Naive thymus-derived CD4-positive, alpha-beta T cell (primary cell): ENCODE measurements at regions of chr16 and their contacts with region 1.

Region 1: DNA sequence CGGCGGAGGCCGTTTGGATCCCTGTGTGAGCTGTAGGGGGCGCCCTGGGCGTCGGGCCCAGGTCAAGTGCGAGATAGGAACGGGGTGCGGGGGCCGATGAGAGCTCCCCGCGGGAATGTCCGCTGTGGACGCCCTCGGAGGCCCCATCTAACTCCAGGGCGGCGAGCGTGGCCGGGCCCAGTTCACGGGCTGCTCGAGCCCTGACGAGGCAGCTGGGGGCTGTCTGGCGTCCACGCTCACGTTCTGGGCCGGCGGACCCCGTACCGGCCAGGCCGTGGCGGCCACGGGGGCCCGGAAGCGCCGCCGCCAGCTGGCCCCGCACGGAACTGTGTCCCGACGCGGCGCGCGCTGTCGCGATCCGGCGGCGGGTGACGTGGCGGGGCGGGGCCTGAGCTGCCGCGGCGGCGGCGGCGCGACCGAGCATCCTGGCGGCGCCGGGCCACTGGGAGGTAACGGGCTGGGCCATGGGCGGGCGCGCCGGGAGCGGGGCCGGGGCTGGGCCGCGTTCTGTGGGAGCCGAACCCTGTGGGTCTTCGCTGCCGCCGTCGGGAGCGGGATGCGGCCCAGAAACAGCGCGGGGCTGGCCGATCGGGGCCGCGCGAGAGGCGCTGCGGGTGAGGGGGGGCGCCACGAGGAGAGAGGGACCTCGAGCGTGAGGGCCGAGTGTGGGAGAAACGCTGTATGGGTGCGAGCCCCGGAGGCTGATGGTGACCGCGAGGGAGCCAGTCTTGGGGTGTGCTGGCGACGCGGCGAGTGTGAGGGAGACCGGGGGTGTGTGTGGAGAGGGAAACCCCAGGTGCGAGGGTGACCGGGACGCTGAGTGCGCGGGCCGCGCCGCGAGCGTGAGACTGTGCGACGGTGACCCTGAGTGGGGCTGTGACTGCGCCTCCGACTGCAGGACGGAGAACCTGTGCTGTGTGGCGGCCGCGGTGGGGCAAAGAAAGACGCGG is at the start of gene SLC7A6:
- DNase-seq: peak; percentile 78 to 91 (median 84)
- ATAC-seq: peak; percentile 83
- H3K4me3 ChIP-seq: peak within 1 kb of the TSS; percentile 78
- H3K4me3 Mint-ChIP-seq: peak within 1 kb of the TSS; percentile 93 to 100 (median 97)
- H3K27ac ChIP-seq: peak within 1 kb of the TSS; percentile 99
- H3K27ac Mint-ChIP-seq: peak within 1 kb of the TSS; percentile 89 to 100 (median 98)
- H3K4me1 ChIP-seq: peaks cover 27 to 39% of the 10 kb centered on the region in 2 donors
- H3K4me1 Mint-ChIP-seq: peaks cover 40 to 69% (median 56%) of the 10 kb centered on the region in 7 donors
- H3K27me3 ChIP-seq: no peaks in the 10 kb centered on the region
- H3K27me3 Mint-ChIP-seq: no peaks in the 10 kb centered on the region
- total RNA-seq, gene SLC7A6: 112 to 248 (median 207) TPM

Region 2: DNA sequence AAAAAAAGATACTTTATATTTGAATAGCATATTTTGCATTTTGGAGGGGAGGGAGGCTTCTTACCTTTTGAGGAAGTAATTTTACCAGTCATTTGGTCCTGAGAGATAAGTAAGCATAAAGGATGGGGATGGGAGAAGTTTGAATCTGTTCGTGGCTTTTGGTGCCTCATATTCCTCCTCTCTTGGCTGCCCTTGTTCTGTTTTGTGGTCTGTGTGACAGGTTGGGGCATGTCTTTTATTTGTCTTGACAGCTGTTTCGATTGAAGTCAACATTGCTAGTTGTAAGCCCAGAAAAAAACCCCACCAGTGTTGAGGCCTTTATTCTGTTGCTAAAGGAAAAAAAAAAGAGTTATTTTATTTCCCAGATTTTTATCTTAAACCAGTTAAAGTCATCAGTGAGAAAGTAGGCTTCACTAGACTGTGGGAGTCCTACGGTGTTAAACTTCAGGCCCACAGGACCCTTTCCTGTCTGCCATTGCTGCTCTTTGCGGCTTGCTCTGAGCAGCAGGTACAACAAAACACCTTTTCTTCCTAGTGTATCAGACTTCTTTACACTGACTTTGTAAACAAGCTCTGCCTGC is 11.3 kb after region 1 on chr16:
- CTCF ChIA-PET with region 1: interaction called, 317 read pairs
- POLR2A ChIA-PET with region 1: interaction called, 78 read pairs
- intact Hi-C with region 1: loop called (anchors 1 kb)
- DNase-seq: peak in 7 of 9 donors; percentile 68 to 84 (median 83)
- ATAC-seq: peak; percentile 86
- H3K4me3 ChIP-seq: peak overlapping the region; percentile 38
- H3K4me3 Mint-ChIP-seq: peak overlapping the region; percentile 71 to 100 (median 80)
- H3K27ac ChIP-seq: peak overlapping the region; percentile 83
- H3K27ac Mint-ChIP-seq: peak overlapping the region; percentile 89 to 98 (median 97)
- H3K4me1 ChIP-seq: peaks cover 58 to 83% of the 10 kb centered on the region in 2 donors
- H3K4me1 Mint-ChIP-seq: peaks cover 40 to 84% (median 74%) of the 10 kb centered on the region in 7 donors
- H3K27me3 ChIP-seq: no peaks in the 10 kb centered on the region
- H3K27me3 Mint-ChIP-seq: no peaks in the 10 kb centered on the region

Region 3: DNA sequence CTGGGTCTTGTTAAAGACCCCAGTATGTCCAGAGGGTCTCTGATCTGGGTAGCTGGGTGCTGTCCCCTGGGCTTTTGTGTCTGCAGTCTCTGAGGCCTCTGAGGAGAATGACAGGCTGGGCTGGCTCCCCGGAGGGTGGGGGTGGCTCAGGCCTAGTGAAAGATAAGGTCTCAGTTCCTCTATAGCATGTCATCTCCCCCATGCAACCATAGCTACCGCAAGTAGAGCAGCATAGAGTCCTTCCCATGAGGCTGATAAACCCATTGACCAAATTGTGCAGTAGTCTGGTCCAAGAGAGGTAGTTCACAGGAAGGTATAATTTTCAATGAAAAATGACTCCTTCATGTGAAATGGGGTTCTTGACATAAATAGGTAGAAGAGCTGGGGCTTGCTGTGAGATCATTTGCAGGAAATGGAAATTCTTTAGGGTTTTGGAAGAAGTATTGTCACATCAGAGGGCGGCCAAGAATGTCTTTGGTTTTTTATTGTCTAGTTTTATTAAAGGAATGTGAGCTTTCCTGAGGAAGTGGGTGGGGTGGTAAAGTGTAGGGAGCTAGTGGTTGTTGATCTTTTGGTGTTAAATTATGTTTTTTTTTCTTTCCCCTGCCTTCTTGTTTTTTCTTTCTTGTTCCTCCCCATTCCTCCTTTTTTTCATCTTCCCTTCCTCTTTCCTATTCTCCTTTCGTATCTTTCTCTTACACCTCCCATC is 25.4 kb after region 1 on chr16:
- CTCF ChIA-PET with region 1: interaction called, 317 read pairs
- POLR2A ChIA-PET with region 1: interaction called, 531 read pairs
- intact Hi-C with region 1: loop called (anchors 1 kb)
- DNase-seq: peak in 6 of 9 donors; percentile 20 to 57 (median 52)
- ATAC-seq: peak; percentile 75
- H3K4me3 ChIP-seq: peak overlapping the region; percentile 2
- H3K4me3 Mint-ChIP-seq: peak overlapping the region; percentile 43 to 87 (median 68)
- H3K27ac ChIP-seq: peak overlapping the region; percentile 68
- H3K27ac Mint-ChIP-seq: peak overlapping the region; percentile 84 to 95 (median 90)
- H3K4me1 ChIP-seq: peaks cover 76 to 83% of the 10 kb centered on the region in 2 donors
- H3K4me1 Mint-ChIP-seq: peaks cover 70 to 97% (median 87%) of the 10 kb centered on the region in 7 donors
- H3K27me3 ChIP-seq: no peaks in the 10 kb centered on the region
- H3K27me3 Mint-ChIP-seq: no peaks in the 10 kb centered on the region

Region 4: DNA sequence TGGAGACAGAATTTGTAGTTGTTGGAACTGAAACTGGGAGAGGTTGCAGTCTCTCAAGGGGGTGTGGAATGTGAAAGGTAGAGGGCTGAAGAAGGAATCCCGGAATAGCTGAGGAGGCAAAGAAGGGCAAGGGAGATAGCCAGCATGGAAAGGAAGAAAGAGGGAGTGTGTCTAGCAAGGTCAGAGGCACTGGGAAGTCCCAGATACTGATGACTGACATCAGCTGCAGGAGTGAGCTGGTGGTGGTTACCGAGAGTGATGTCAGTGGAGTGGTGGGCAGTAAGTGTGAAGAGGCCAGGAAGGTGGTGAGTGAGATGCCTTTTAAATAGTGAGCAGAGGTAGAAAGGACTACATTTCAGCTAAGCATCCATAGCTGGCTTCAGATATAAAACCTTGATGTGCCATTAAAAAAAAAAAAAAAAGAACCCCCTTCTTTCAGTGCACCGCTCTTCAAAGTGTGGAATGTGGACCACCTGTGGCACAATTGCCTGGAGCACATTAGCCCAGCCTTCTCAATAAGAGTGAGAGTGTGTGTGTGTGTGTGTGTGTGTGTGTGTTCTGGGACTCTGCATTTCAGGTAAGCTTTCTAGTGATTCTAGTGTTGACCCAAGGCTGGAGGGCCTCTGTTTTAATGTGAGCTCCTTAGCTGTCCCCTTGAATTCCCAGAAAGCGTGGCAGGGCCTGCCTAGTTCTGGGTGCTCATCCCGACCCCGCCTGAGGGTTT is 54.9 kb after region 1 on chr16:
- CTCF ChIA-PET with region 1: interaction called, 224 read pairs
- POLR2A ChIA-PET with region 1: interaction called, 6 read pairs
- intact Hi-C with region 1: no loop called
- DNase-seq: peak in 1 of 9 donors; percentile 65
- ATAC-seq: peak; percentile 60
- H3K4me3 ChIP-seq: no peak overlapping the region
- H3K4me3 Mint-ChIP-seq: peak overlapping the region in 1 of 10 donors; percentile 43
- H3K27ac ChIP-seq: no peak overlapping the region
- H3K27ac Mint-ChIP-seq: peak overlapping the region; percentile 6 to 90 (median 55)
- H3K4me1 ChIP-seq: no peaks in the 10 kb centered on the region
- H3K4me1 Mint-ChIP-seq: peaks cover 15 to 41% (median 30%) of the 10 kb centered on the region in 7 donors
- H3K27me3 ChIP-seq: no peaks in the 10 kb centered on the region
- H3K27me3 Mint-ChIP-seq: no peaks in the 10 kb centered on the region

Region 5: GRCh38 chr16:68335175-68335574 is 70.8 kb after region 1 on chr16:
- CTCF ChIA-PET with region 1: interaction called, 224 read pairs
- POLR2A ChIA-PET with region 1: interaction called, 68 read pairs
- intact Hi-C with region 1: no loop called
- DNase-seq: no peak
- ATAC-seq: no peak
- H3K4me3 ChIP-seq: no peak overlapping the region
- H3K4me3 Mint-ChIP-seq: no peak overlapping the region
- H3K27ac ChIP-seq: no peak overlapping the region
- H3K27ac Mint-ChIP-seq: peak overlapping the region in 2 of 9 donors; percentile 71 to 77
- H3K4me1 ChIP-seq: peaks cover 0 to 13% of the 10 kb centered on the region in 2 donors
- H3K4me1 Mint-ChIP-seq: peaks cover 11 to 25% (median 19%) of the 10 kb centered on the region in 7 donors
- H3K27me3 ChIP-seq: no peaks in the 10 kb centered on the region
- H3K27me3 Mint-ChIP-seq: no peaks in the 10 kb centered on the region

Region 6: DNA sequence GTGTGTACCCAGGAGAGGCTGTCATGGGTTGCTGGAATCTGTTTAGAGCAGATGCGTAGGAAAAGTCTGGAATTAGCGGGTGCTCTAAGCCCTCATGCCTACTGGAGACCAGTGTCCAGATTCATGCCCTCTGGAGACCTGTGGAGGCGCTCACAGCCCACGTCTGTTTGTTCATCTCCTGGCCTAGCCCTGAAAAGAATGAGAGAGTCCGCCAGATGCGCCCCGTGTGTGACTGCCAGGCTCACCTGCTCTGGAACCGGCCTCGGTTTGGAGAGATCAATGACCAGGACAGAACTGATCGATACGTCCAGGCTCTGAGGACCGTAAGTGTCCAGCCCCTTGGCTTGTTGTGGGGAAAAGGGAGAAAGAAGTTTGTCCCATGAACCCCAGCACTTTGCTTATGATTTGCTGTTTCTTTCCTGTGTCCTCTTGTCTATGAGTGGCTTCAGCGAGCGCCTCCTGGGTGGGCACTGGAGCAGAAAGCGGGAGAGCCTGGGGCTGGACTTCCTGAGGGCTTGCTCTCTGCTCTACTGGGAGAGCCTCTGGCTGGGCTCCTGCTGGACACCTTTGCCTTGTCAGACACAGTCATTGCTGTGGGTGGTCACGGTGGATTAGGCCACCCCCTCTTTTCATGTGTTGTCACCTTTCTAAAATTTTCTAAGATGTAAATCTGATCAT is 81.7 kb after region 1 on chr16:
- CTCF ChIA-PET with region 1: no interaction called
- POLR2A ChIA-PET with region 1: no interaction called
- intact Hi-C with region 1: no loop called
- DNase-seq: no peak
- ATAC-seq: no peak
- H3K4me3 ChIP-seq: no peak overlapping the region
- H3K4me3 Mint-ChIP-seq: no peak overlapping the region
- H3K27ac ChIP-seq: no peak overlapping the region
- H3K27ac Mint-ChIP-seq: no peak overlapping the region
- H3K4me1 ChIP-seq: peaks cover 0 to 5% of the 10 kb centered on the region in 2 donors
- H3K4me1 Mint-ChIP-seq: peaks cover 0 to 20% (median 11%) of the 10 kb centered on the region in 7 donors
- H3K27me3 ChIP-seq: no peaks in the 10 kb centered on the region
- H3K27me3 Mint-ChIP-seq: no peaks in the 10 kb centered on the region